Panc1 (cell line): ENCODE measurements at regions of chr20 and their contacts with region 1.

Region 1: DNA sequence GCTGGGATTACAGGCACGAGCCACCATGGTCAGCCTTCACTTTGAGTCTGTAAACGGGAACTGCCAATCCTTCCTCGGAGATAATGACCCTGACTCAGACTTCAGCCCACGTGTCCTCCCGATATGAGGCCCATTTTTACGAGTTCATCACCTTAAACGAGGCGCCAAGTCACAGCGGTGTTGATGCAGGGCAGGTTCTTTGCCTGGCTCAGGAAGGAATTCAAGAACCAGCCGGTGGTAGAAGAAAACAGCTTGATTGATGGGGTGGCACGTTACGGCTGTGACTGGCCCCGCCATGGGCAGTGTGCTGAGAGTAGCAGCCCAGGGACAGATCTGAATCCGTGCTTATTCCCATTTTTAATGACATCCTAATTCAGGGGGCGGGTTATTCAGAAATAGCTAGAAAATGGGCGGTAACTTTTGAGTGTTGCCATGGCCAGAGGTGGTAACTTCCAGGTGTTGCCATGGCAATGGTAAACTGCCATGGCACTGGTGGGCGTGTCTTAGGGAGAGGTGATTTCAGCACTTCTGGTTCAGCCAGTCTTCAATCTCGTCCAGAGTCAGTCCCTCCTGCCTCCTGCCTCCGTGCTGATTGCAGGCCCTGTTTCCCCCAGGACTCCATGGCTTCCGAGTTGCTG is 9.1 kb upstream of the MAP1LC3A start:
- DNase-seq: no peak
- ATAC-seq: no peak; the same call in 1 of the 2 replicates
- H3K4me3 ChIP-seq: no peak overlapping the region
- H3K27ac ChIP-seq: no peak overlapping the region
- H3K4me1 ChIP-seq: no peaks in the 10 kb centered on the region
- H3K27me3 ChIP-seq: no peaks in the 10 kb centered on the region
- CTCF ChIP-seq: no peak

Region 2: DNA sequence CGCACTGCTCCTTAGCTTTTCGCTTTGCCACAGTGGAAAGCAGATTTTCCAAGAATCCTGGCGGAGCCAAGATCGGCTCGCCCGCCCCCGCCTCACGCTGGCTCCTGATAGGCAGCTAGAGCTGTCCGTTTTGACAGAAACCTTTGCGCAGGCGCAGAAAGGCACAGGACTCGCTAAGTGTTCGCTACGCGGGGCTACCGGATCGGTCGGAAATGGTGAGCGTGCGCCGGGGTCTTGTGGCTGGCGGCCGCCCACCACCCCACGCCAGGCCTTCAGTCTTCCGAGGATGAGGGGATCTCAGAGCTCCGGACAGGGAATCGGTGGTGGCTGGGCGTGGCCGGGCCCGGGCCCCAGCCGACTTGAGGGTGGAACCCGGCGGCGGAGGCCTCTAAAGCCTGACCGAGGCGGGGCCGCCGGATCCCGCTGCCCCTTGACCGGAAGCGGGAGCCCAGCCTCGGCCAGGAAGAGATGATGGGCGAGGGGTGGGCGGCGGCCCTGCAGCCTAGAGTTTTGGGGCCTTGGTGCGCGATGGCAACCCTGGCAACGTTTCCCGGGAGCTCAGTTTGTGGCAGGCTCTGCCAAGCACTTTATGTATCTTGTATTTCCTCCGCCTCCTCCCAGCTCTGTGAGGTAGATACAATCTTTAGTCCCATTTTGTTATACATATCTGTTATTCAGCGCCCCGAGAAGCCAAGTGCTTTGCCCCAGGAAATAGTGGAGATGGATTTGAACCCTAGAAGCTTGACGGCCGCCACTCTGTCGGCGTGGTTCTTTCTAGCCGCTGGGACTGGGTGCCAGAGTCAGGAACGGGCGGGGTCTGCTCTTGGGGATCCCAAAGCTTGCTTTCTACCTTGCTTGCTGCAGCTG is 32.9 kb before region 1 on chr20 and contains the start of gene DYNLRB1:
- CTCF ChIA-PET with region 1: no interaction called
- POLR2A ChIA-PET with region 1: interaction called, 13 read pairs
- in situ Hi-C with region 1: no loop called
- intact Hi-C with region 1: no loop called
- DNase-seq: peak; percentile 77
- ATAC-seq: peak; percentile 93
- H3K4me3 ChIP-seq: peak within 1 kb of the TSS; percentile 70 to 98
- H3K27ac ChIP-seq: peak within 1 kb of the TSS; percentile 92
- H3K4me1 ChIP-seq: peaks cover 9% of the 10 kb centered on the region
- H3K27me3 ChIP-seq: no peaks in the 10 kb centered on the region
- CTCF ChIP-seq: no peak
- total RNA-seq, gene DYNLRB1: 155 TPM

Region 3: DNA sequence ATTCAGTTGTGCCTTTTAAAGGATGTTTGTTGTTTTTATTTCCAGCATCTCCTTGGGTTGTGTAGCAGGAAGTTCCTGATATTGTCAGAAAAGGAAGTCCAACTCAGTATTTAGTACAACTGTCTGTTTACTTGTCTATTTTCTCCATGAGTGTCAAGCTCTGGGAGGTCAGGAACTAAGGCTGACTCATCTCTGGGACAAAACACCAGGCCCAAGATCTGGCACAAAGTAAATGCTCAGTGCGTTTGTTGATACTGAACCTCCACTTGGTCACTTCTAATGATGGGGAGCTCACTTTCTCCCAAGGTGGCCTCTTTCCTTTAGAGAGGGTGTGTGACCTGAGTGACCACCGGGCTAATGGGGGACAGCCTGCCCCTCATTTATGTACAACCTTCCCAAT is 140.1 kb after region 1 on chr20:
- CTCF ChIA-PET with region 1: no interaction called
- POLR2A ChIA-PET with region 1: interaction called, 10 read pairs
- in situ Hi-C with region 1: no loop called
- intact Hi-C with region 1: no loop called
- DNase-seq: no peak
- ATAC-seq: peak; percentile 43; the same call in 1 of the 2 replicates
- H3K4me3 ChIP-seq: no peak overlapping the region
- H3K27ac ChIP-seq: no peak overlapping the region
- H3K4me1 ChIP-seq: no peaks in the 10 kb centered on the region
- H3K27me3 ChIP-seq: no peaks in the 10 kb centered on the region
- CTCF ChIP-seq: no peak

Region 4: DNA sequence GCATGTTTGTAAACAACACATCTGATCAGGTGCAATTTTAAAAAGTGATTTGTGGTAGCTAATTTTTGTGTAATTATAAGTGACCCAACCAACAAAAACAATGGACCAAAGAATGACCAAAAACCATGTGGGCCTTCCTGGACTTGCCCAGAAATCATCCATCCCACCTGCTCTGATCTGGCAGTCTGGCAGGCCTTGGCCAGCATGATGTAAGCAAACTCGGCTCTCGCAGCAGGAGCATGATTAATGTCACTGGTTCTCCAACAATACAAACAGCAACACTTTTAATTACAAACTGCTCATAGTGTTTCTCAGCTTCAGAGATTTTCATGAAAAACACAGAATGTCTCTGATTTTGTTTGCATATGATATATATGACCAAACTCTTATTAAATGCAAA is 170.9 kb after region 1 on chr20:
- CTCF ChIA-PET with region 1: no interaction called
- POLR2A ChIA-PET with region 1: no interaction called
- in situ Hi-C with region 1: no loop called
- intact Hi-C with region 1: no loop called
- DNase-seq: no peak
- ATAC-seq: no peak
- H3K4me3 ChIP-seq: no peak overlapping the region
- H3K27ac ChIP-seq: no peak overlapping the region
- H3K4me1 ChIP-seq: no peaks in the 10 kb centered on the region
- H3K27me3 ChIP-seq: no peaks in the 10 kb centered on the region
- CTCF ChIP-seq: no peak

Region 5: DNA sequence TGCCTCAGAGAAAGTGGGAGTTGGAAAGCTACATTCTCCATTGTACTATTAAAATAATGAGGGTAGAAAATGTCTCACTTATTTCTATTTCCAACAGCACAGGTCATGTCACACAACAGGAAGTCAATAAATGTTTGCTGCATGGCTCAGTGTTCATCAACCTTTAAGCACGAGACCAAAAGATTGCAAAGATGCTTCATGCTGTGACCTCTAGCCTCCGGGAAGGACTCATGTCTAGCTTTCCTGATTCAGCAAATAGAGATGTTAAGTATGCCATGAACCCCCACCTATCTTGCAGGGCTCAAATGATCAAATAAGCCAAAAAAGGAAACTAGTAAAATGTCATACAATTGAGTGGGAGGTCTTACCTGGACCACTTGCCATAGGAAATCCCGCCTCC is 218.7 kb after region 1 on chr20:
- CTCF ChIA-PET with region 1: no interaction called
- POLR2A ChIA-PET with region 1: no interaction called
- in situ Hi-C with region 1: no loop called
- intact Hi-C with region 1: no loop called
- DNase-seq: no peak
- ATAC-seq: no peak
- H3K4me3 ChIP-seq: no peak overlapping the region
- H3K27ac ChIP-seq: no peak overlapping the region
- H3K4me1 ChIP-seq: no peaks in the 10 kb centered on the region
- H3K27me3 ChIP-seq: no peaks in the 10 kb centered on the region
- CTCF ChIP-seq: no peak